ENCODE measurements at regions of chr9 and their contacts with region 1.

Region 1: GRCh38 chr9:34072868-34073590 is 24.3 kb upstream of the UBAP2 start:
- DNase-seq: peak; percentile 44
- H3K4me3 ChIP-seq: no peak overlapping the region
- CTCF ChIP-seq: no peak

Region 2: DNA sequence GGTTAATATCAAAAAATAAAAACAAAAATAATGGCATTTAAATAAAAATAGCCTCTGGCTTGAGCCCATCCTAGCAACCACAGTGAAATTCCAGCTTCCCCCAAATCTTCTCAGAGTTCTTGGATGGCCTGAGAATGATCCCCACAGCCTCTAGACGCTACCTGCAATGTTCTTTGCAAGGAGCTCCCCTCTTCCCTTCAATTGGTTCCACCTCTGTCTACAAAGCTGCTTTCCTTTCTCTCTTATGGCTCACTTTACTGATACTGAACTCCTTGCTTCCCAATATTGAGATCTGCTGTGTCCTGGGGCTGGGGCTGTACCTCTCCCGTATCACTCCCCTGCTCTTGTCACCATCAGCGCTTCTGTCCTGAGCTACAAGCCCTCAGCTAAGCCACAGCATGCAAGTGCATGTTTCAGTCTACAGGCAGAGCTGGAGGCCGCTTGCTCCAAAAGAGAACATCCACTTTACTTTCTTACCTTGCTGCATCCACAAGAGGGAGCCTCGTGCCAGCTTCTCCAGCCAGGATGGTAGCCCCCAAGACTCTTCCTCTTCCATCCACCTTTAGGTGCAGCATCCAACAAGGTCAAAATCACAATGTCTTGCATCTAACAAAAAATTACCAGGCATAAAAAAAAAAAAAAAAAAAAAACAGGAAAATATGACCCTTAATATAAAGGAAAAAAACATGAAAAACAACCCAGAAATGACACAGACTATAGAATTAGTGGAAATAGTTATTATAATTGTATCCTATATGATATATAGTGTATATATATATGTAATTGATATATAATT is 335.0 kb before region 1 on chr9:
- CTCF ChIA-PET with region 1: interaction called, 19 read pairs
- POLR2A ChIA-PET with region 1: no interaction called
- DNase-seq: peak; percentile 14
- H3K4me3 ChIP-seq: no peak overlapping the region
- CTCF ChIP-seq: peak; percentile 79

Region 3: GRCh38 chr9:33924978-33925797 is 147.8 kb before region 1 on chr9:
- CTCF ChIA-PET with region 1: interaction called, 45 read pairs
- POLR2A ChIA-PET with region 1: no interaction called
- DNase-seq: no peak
- H3K4me3 ChIP-seq: no peak overlapping the region
- CTCF ChIP-seq: peak; percentile 67

Region 4: DNA sequence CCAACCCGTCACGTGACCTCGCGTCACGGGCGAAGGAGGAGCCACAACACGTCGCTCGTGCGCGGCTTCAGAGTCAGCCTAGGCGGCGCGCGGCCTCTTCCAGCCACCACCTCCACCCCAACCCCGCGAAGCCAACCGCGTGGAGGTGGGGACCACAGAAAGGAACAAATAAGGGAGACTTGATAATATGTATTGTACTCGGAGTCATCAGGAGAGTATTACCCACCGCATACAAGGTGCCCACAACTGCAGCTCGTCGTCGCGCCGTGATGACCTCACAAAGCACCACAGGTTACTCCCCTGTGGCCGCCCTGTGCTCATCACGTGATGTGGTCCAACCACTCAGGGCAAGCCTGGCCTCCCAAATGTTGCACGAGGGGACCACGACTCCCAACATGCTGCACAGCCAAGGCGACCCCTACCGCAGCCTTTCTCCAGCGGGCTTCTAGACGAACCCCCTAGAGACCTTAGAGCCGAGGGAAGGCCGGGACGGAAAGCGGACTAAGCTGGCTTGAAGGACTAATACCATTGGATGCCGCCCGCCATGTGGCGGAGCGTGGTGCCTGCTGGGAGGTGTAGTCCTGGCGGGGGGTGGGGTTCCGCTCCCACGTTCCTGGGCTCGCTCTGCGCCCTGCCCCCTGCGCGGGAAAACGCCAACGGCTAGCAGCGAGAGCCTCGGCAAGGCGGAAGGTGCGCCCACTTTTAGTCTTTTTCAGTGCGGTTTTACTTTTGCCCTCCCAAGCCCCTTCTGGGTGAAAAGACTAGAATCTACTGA is 23.9 kb before region 1 on chr9:
- CTCF ChIA-PET with region 1: interaction called, 14 read pairs
- POLR2A ChIA-PET with region 1: interaction called, 4 read pairs
- DNase-seq: peak; percentile 81
- H3K4me3 ChIP-seq: peak overlapping the region; percentile 90
- CTCF ChIP-seq: no peak

Region 5: DNA sequence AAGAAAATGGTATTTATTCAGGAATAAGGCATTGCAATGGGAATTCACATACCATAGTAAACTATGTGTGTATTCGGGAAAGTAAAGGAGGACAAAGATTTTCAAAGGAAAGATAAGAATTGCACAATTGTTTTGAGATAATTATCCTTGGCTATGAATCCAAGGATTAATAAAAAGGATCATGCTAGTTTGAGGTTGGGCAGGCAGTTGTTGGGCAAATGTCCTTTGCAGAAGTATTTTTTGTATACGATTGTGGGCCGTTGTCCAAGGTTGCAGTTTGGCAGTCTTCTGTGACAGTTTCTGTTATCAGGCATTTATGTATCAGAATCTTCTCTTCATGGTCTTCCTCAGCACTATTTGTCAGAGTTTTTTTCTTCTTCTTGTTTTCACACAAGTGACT is 13.7 kb before region 1 on chr9:
- CTCF ChIA-PET with region 1: interaction called, 18 read pairs
- POLR2A ChIA-PET with region 1: interaction called, 4 read pairs
- DNase-seq: no peak
- H3K4me3 ChIP-seq: no peak overlapping the region
- CTCF ChIP-seq: no peak

Region 6: GRCh38 chr9:34084562-34084961 is 11.5 kb after region 1 on chr9:
- CTCF ChIA-PET with region 1: interaction called, 34 read pairs
- POLR2A ChIA-PET with region 1: no interaction called
- DNase-seq: no peak
- H3K4me3 ChIP-seq: no peak overlapping the region
- CTCF ChIP-seq: no peak

Region 7: GRCh38 chr9:34093578-34093977 is 20.5 kb after region 1 on chr9:
- CTCF ChIA-PET with region 1: interaction called, 13 read pairs
- POLR2A ChIA-PET with region 1: no interaction called
- DNase-seq: no peak
- H3K4me3 ChIP-seq: no peak overlapping the region
- CTCF ChIP-seq: no peak

Region 8: GRCh38 chr9:34133436-34133949 is 60.5 kb after region 1 on chr9:
- CTCF ChIA-PET with region 1: no interaction called
- POLR2A ChIA-PET with region 1: no interaction called
- DNase-seq: no peak
- H3K4me3 ChIP-seq: no peak overlapping the region
- CTCF ChIP-seq: no peak

Region 9: GRCh38 chr9:34271265-34272006 is 198.4 kb after region 1 on chr9:
- CTCF ChIA-PET with region 1: no interaction called
- POLR2A ChIA-PET with region 1: no interaction called
- DNase-seq: no peak
- H3K4me3 ChIP-seq: no peak overlapping the region
- CTCF ChIP-seq: no peak

Region 10: DNA sequence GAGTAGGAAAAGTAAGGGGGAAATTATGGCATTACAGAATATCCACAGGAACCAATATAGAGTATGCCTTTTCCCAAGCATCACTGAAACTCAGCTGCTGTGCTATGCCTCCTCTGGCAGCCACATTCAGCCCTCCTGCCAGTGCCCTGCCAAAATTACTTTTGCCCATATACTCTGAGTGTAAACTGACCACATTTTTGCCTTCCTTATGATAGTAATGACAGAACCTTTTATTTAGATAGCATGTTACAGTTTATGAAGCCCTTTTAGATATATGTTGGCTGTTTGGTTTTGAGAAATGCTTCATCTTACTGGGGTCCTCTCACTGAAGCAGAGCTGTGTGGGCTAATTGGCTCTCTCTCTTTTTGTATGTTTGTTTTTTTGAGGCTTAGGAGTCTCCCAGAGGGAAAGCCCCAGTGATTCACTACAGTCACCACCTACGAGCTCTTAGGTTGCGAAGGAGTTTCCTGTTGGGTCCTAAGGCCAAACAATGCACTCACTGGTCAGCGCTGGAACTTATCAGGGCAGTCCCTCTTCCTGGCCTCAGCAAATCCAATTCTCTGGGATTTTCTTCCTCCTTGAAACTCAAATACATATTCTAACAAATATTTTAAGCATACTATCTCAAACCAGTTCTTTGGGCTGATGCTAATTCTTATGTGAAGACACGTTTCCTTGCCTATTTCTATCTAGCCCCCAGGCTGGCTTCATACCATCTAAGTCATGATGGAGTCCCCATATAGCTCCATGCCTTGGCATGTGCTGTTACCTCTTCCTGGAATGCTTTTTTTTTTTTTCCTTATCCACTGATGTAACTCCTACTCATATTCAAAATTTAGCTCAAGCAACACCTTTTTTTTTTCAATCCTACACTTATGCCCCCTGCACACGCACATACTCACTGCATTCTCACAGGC is 888.8 kb after region 1 on chr9:
- CTCF ChIA-PET with region 1: no interaction called
- POLR2A ChIA-PET with region 1: no interaction called
- DNase-seq: no peak
- H3K4me3 ChIP-seq: no peak overlapping the region
- CTCF ChIP-seq: no peak